Right lobe of liver (tissue), 6 donors: ENCODE measurements at regions of chr13 and their contacts with region 1.

Region 1: GRCh38 chr13:28819735-28820098 is 422 bp upstream of the MTUS2 start:
- DNase-seq: peak; percentile 75 to 85 (median 77)
- ATAC-seq: peak; percentile 90 to 98 (median 96)
- H3K4me3 ChIP-seq: peak overlapping the region; percentile 30 to 55 (median 38)
- H3K27ac ChIP-seq: no peak overlapping the region
- H3K4me1 ChIP-seq: peaks cover 0 to 7% (median 0%) of the 10 kb centered on the region in 4 donors
- H3K27me3 ChIP-seq: no peaks in the 10 kb centered on the region
- CTCF ChIP-seq: peak; percentile 12 to 60 (median 34)
- POLR2A ChIP-seq: no peak

Region 2: GRCh38 chr13:28725046-28725445 is 94.7 kb before region 1 on chr13:
- intact Hi-C with region 1: no loop called
- DNase-seq: no peak
- ATAC-seq: peak; percentile 12 to 43 (median 29)
- H3K4me3 ChIP-seq: no peak overlapping the region
- H3K27ac ChIP-seq: no peak overlapping the region
- H3K4me1 ChIP-seq: peaks cover 0 to 28% (median 8%) of the 10 kb centered on the region in 4 donors
- H3K27me3 ChIP-seq: no peaks in the 10 kb centered on the region
- CTCF ChIP-seq: no peak
- POLR2A ChIP-seq: no peak

Region 3: DNA sequence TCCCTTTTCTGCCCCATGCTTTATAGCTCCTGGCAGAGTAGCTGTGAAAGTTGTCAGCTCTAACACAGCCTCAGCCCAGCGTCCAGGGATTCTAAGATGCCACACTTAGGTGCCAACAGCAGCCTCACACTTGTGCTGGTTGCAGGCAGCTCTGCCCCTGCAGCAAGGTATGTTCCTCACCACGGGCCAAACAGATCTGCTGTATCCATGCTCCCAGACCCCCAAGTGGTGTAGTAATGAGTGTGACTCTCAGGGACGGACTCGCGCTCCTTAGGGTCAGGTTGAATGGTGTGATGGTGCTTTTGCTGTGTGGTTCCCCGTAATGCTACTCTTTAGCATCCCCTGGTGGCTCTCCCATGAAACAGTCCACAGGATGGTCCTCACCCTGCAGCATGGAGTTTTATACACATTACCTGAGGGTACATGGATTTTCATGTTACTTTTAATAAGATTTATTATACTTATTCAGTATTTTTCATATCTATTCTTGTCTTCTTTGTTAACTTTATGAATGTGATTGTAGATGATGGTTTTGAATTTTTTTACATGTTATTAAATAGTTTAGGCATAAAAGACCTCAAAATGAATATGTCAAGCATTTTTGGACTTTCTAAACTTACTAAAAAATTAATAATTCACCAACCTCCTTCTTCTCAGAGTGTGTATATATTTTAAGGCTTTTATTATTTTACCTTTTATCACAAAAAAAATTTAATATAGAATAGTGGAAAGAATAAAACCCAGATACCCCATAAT is 543.3 kb after region 1 on chr13:
- intact Hi-C with region 1: loop called in 1 of 2 experiments (anchors 10 kb)
- DNase-seq: peak in 1 of 3 donors; percentile 26
- ATAC-seq: peak; percentile 93 to 100 (median 96)
- H3K4me3 ChIP-seq: no peak overlapping the region
- H3K27ac ChIP-seq: no peak overlapping the region
- H3K4me1 ChIP-seq: no peaks in the 10 kb centered on the region
- H3K27me3 ChIP-seq: no peaks in the 10 kb centered on the region
- CTCF ChIP-seq: peak; percentile 89 to 95 (median 93)
- POLR2A ChIP-seq: no peak